ENCODE measurements at regions of chr2 and their contacts with region 1.

Region 1: DNA sequence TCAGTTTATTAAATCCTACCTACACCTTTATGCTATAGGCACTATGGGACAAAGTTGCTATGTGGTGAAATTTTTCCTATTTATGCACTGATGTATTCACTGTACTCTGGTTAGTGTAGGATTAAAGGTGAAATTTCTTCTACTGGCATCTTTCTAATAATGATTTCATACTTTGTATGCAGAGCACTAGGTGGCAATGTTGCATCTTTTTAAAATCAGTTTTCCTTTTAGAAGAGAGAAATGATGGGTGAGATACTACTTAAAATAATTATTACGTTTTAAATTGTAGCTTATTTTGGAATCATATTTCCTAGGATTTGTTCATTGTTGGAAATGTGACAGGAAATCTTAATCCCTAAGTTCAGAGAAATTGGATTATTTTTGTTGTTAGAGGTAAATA is 150.9 kb downstream of the CD8B2 start:
- DNase-seq: no peak
- H3K4me3 ChIP-seq: no peak overlapping the region
- H3K27ac ChIP-seq: no peak overlapping the region
- H3K4me1 ChIP-seq: peaks cover 0 to 6% (median 0%) of the 10 kb centered on the region in 4 donors
- H3K27me3 ChIP-seq: no peaks in the 10 kb centered on the region
- CTCF ChIP-seq: peak; percentile 41 to 57 (median 51)
- EP300 ChIP-seq: no peak
- POLR2A ChIP-seq: no peak

Region 2: GRCh38 chr2:106607371-106607770 is 30.7 kb before region 1 on chr2:
- in situ Hi-C with region 1: no loop called
- intact Hi-C with region 1: no loop called
- DNase-seq: peak; percentile 45
- H3K4me3 ChIP-seq: no peak overlapping the region
- H3K27ac ChIP-seq: peak overlapping the region in 1 of 4 donors; percentile 10
- H3K4me1 ChIP-seq: peaks cover 3 to 29% (median 19%) of the 10 kb centered on the region in 4 donors
- H3K27me3 ChIP-seq: no peaks in the 10 kb centered on the region
- CTCF ChIP-seq: no peak
- EP300 ChIP-seq: no peak
- POLR2A ChIP-seq: no peak

Region 3: DNA sequence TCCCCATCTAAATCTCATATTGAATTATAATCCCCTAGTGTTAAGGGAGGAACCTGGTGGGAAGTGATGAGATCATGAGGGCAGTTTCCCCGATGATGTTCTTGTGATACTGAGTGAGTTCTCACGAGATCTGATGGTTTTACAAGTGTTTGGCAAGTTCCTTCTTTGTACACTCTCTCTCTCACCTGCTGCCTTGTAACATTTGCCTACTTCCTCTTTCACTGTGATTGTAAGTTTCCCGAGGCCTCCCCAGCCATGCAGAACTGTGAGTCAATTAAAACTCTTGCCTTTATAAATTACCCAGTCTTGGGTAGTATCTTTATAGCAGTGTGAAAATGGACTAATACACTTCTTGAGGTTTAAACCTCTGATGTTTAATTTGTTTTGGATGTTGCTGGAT is 26.6 kb after region 1 on chr2:
- in situ Hi-C with region 1: no loop called
- intact Hi-C with region 1: no loop called
- DNase-seq: no peak
- H3K4me3 ChIP-seq: no peak overlapping the region
- H3K27ac ChIP-seq: no peak overlapping the region
- H3K4me1 ChIP-seq: no peaks in the 10 kb centered on the region
- H3K27me3 ChIP-seq: no peaks in the 10 kb centered on the region
- CTCF ChIP-seq: no peak
- EP300 ChIP-seq: no peak
- POLR2A ChIP-seq: no peak

Region 4: DNA sequence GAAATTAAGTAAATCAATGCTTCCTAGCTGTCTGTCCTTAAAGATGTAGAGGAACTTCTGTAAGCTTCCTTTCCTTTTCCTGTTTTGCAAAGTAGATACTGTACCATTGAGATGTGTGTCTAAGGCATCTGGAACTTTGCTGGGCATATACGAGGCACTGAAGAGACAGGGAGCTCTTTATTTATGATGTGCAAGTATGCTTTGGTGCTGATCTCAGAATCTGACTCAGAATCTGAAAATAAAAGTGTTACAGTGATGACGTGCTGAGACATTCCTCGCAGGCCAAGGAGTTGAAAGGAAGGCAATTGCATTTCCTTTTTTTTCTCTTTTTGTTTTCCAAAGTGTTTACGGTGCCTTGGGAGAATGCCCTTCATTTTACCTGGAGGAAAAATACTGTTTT is 957.7 kb after region 1 on chr2:
- in situ Hi-C with region 1: loop called in 1 of 4 experiments (anchors 25 kb)
- intact Hi-C with region 1: no loop called
- DNase-seq: no peak
- H3K4me3 ChIP-seq: no peak overlapping the region
- H3K27ac ChIP-seq: no peak overlapping the region
- H3K4me1 ChIP-seq: no peaks in the 10 kb centered on the region
- H3K27me3 ChIP-seq: no peaks in the 10 kb centered on the region
- CTCF ChIP-seq: no peak
- EP300 ChIP-seq: no peak
- POLR2A ChIP-seq: no peak

Region 5: DNA sequence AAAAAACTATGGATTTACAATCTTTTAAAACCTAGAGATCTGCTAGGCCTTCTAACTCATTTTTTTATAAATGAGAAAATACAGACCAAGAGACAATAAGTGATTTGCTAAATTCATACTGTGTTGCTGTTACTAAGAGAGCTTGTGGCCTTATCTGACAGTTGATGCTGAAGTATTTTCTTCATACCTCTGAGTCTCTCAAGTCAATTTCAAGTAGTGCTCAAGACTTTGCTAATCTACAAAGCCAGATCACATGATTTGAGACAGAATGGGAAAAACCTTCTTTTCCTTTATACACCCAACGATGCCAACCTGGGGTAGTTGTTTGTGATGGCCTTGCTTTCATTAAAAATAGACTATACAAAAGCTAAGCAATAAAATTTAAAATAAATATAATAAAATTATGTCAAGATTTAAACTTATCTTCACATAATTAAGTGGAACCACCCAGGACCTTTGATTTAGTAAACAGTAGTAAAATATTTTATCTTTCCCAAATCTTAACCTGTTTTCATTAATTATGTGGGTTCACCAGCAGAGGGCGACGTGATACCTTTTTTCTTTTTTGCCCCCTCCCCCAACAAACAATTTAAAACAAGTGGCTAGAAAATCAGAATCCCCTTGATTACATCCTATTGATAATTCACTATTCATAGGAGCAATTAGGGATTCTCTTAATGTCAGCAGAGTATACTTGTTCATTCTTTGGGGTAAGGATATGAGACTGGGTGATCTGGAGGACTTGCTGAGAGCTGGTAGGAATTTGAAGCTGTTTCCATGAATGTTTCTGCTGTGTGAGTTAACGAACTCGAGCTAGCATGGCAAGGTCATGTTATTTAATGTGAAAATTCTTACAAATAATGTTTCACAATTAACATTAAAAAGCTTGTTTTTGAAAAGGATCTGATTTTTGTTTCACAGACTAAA is 1298.7 kb after region 1 on chr2:
- in situ Hi-C with region 1: loop called in 2 of 4 experiments (anchors 25 kb)
- intact Hi-C with region 1: no loop called
- DNase-seq: no peak
- H3K4me3 ChIP-seq: no peak overlapping the region
- H3K27ac ChIP-seq: no peak overlapping the region
- H3K4me1 ChIP-seq: no peaks in the 10 kb centered on the region
- H3K27me3 ChIP-seq: no peaks in the 10 kb centered on the region
- CTCF ChIP-seq: peak; percentile 28 to 39 (median 30)
- EP300 ChIP-seq: no peak
- POLR2A ChIP-seq: no peak

Region 6: GRCh38 chr2:108184419-108184818 is 1546.4 kb after region 1 on chr2:
- in situ Hi-C with region 1: loop called in 2 of 4 experiments (anchors 25 kb)
- intact Hi-C with region 1: no loop called
- DNase-seq: no peak
- H3K4me3 ChIP-seq: no peak overlapping the region
- H3K27ac ChIP-seq: no peak overlapping the region
- H3K4me1 ChIP-seq: no peaks in the 10 kb centered on the region
- H3K27me3 ChIP-seq: no peaks in the 10 kb centered on the region
- CTCF ChIP-seq: peak; percentile 13 to 30 (median 17)
- EP300 ChIP-seq: no peak
- POLR2A ChIP-seq: no peak